B cell (primary cell): ENCODE measurements at regions of chr3 and their contacts with region 1.

Region 1: DNA sequence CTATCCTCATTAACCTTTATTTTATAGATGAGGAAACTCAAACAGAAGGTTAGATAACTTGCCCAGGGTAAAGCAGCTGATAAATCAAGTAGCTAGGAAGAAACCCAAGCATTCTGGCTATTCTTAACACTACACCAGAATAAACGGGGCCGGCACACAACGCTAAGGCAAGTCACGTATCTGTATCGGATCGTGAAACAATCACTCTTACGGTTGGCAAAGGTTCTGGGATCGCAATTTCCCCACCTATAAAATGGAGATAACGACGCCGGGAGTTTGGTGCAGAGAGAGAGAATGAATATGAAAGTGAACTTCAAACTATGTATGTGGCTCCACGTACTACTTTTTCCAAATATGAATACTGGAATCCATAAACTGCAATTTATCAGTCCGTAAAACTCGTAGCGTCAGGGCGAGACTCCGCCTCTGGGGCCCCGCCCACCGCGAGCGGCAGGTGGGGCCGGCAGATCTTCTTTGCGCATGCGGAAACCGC is 252 bp upstream of the ARMC8 start:
- DNase-seq: peak; percentile 94
- ATAC-seq: peak; percentile 94
- H3K4me3 ChIP-seq: peak overlapping the region; percentile 79 to 98 (median 94)
- H3K4me3 Mint-ChIP-seq: peak overlapping the region; percentile 97
- H3K27ac ChIP-seq: peak overlapping the region; percentile 85 to 89
- H3K27ac Mint-ChIP-seq: peak overlapping the region; percentile 97
- H3K4me1 ChIP-seq: peaks cover 8 to 17% of the 10 kb centered on the region in 2 donors
- H3K4me1 Mint-ChIP-seq: peaks cover 34% of the 10 kb centered on the region
- H3K27me3 ChIP-seq: peaks cover 0 to 19% (median 7%) of the 10 kb centered on the region in 4 experiments
- H3K27me3 Mint-ChIP-seq: peaks cover 15% of the 10 kb centered on the region
- CTCF ChIP-seq: no peak

Region 2: GRCh38 chr3:136196401-136197158 is 1990.3 kb before region 1 on chr3:
- CTCF ChIA-PET with region 1: no interaction called
- POLR2A ChIA-PET with region 1: interaction called, 3 read pairs
- intact Hi-C with region 1: loop called (anchors 10 kb)
- DNase-seq: peak; percentile 99
- ATAC-seq: peak; percentile 68
- H3K4me3 ChIP-seq: peak overlapping the region; percentile 65 to 95 (median 86)
- H3K4me3 Mint-ChIP-seq: peak overlapping the region; percentile 97
- H3K27ac ChIP-seq: peak overlapping the region; percentile 91 to 99
- H3K27ac Mint-ChIP-seq: peak overlapping the region; percentile 100
- H3K4me1 ChIP-seq: peaks cover 34 to 36% of the 10 kb centered on the region in 2 donors
- H3K4me1 Mint-ChIP-seq: peaks cover 36% of the 10 kb centered on the region
- H3K27me3 ChIP-seq: no peaks in the 10 kb centered on the region
- H3K27me3 Mint-ChIP-seq: no peaks in the 10 kb centered on the region
- CTCF ChIP-seq: no peak

Region 3: GRCh38 chr3:138174421-138175122 is 12.3 kb before region 1 on chr3 and contains the start of gene DBR1:
- CTCF ChIA-PET with region 1: interaction called, 4 read pairs
- POLR2A ChIA-PET with region 1: interaction called, 19 read pairs
- intact Hi-C with region 1: loop called (anchors 1 kb)
- DNase-seq: peak; percentile 88
- ATAC-seq: peak; percentile 93
- H3K4me3 ChIP-seq: peak within 1 kb of the TSS; percentile 75 to 95 (median 81)
- H3K4me3 Mint-ChIP-seq: peak within 1 kb of the TSS; percentile 100
- H3K27ac ChIP-seq: peak within 1 kb of the TSS; percentile 77
- H3K27ac Mint-ChIP-seq: peak within 1 kb of the TSS; percentile 99
- H3K4me1 ChIP-seq: peaks cover 14 to 16% of the 10 kb centered on the region in 2 donors
- H3K4me1 Mint-ChIP-seq: peaks cover 30% of the 10 kb centered on the region
- H3K27me3 ChIP-seq: no peaks in the 10 kb centered on the region
- H3K27me3 Mint-ChIP-seq: peaks cover 3% of the 10 kb centered on the region
- CTCF ChIP-seq: no peak
- total RNA-seq, gene DBR1: 22.6 and 27.6 TPM in 2 replicates

Region 4: DNA sequence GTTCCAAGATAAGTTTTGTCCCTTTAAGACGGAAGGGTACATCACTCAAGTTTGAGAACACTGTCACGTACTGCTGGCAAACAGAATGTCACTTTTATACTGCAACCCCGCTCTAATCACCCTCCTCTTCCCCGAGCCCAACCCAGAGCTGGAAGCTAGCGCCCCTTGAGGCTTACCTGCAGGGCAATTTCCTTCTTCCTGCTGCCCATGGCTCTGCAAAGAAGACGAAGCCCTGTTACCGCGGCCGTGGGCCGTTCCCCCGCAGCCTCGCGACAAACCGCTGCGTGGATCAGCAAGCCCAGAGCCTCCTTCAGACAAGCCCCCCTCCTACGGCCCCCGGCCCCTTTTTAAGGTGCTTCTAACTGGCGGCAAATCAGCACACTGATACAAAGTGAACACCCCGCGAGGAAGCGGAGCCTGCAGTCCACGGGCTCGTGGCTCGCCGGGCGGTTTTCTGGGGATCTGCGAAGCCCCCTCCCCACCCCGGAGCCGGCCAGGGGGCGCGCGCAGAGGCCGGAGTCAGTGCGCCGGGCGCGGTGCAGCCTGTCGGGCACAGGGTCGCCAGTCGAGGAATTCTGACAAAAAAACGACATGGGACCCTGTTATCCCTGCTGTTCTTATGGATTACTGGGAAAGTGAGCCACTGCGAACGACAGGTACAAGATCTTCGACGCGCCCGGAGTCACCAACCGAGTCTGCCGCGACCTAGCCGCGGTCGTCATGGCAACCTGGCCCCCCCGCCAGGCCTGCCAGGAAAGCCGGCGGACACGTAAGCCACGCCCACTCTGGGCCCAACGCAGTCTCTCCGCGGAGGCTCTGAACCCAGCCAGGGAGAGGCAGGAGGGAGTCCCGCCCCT is 142.5 kb after region 1 on chr3 and contains the start of gene NME9:
- CTCF ChIA-PET with region 1: no interaction called
- POLR2A ChIA-PET with region 1: no interaction called
- intact Hi-C with region 1: loop called (anchors 10 kb)
- DNase-seq: peak; percentile 84
- ATAC-seq: peak; percentile 92
- H3K4me3 ChIP-seq: peak within 1 kb of the TSS; percentile 22 to 73 (median 60)
- H3K4me3 Mint-ChIP-seq: peak within 1 kb of the TSS; percentile 93
- H3K27ac ChIP-seq: peak within 1 kb of the TSS in 1 of 2 donors; percentile 49
- H3K27ac Mint-ChIP-seq: peak within 1 kb of the TSS; percentile 62
- H3K4me1 ChIP-seq: peaks cover 7 to 18% of the 10 kb centered on the region in 2 donors
- H3K4me1 Mint-ChIP-seq: peaks cover 13% of the 10 kb centered on the region
- H3K27me3 ChIP-seq: peaks cover 0 to 15% (median 9%) of the 10 kb centered on the region in 4 experiments
- H3K27me3 Mint-ChIP-seq: peaks cover 40% of the 10 kb centered on the region
- CTCF ChIP-seq: peak; percentile 61
- total RNA-seq, gene NME9: not detected in 2 replicates

Region 5: DNA sequence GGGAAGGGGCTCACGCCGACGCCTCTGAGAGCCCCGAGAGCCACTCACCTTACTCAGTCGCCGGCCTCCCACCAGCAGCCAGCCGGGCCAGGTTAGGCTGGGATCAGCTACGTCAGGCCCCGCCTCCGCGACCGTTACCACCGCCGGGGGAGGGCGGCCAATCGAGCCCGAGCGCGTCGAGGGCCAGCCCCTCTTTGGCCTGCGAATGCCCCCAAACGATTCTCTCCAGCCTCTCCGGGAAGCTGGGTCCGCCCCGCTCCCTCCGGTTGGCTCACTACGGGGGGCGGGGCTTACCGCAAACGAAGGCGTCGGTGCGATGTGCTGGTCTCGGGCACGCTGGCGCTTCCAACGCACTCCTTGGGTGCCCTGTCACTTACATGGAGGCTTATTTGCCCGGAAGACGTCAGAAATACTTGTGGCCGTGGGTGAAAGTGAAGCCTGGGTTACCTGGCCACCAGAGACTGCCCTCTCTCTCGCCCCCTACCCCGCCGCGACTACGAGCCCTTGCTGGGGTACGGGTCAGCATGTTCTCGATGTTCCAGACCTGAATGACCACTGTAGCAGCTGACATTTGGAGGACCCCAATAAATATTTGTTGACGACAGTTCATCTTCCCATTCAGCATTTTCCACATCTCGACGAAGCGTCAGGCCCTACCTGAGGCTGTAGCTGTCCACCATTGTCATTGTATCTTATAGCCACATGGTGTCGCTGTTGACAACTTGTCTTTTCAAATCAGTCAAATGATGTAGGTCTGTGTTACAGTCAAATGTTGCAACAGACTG is 407.5 kb after region 1 on chr3 and contains the start of gene CEP70:
- CTCF ChIA-PET with region 1: no interaction called
- POLR2A ChIA-PET with region 1: no interaction called
- intact Hi-C with region 1: loop called (anchors 1 kb)
- DNase-seq: peak; percentile 93
- ATAC-seq: peak; percentile 92
- H3K4me3 ChIP-seq: peak within 1 kb of the TSS; percentile 69 to 93 (median 80)
- H3K4me3 Mint-ChIP-seq: peak within 1 kb of the TSS; percentile 91
- H3K27ac ChIP-seq: peak within 1 kb of the TSS; percentile 71 to 74
- H3K27ac Mint-ChIP-seq: peak within 1 kb of the TSS; percentile 85
- H3K4me1 ChIP-seq: peaks cover 5 to 10% of the 10 kb centered on the region in 2 donors
- H3K4me1 Mint-ChIP-seq: peaks cover 7% of the 10 kb centered on the region
- H3K27me3 ChIP-seq: peaks cover 0 to 3% (median 0%) of the 10 kb centered on the region in 4 experiments
- H3K27me3 Mint-ChIP-seq: no peaks in the 10 kb centered on the region
- CTCF ChIP-seq: peak; percentile 92
- total RNA-seq, gene CEP70: 9.6 and 11.6 TPM in 2 replicates

Region 6: DNA sequence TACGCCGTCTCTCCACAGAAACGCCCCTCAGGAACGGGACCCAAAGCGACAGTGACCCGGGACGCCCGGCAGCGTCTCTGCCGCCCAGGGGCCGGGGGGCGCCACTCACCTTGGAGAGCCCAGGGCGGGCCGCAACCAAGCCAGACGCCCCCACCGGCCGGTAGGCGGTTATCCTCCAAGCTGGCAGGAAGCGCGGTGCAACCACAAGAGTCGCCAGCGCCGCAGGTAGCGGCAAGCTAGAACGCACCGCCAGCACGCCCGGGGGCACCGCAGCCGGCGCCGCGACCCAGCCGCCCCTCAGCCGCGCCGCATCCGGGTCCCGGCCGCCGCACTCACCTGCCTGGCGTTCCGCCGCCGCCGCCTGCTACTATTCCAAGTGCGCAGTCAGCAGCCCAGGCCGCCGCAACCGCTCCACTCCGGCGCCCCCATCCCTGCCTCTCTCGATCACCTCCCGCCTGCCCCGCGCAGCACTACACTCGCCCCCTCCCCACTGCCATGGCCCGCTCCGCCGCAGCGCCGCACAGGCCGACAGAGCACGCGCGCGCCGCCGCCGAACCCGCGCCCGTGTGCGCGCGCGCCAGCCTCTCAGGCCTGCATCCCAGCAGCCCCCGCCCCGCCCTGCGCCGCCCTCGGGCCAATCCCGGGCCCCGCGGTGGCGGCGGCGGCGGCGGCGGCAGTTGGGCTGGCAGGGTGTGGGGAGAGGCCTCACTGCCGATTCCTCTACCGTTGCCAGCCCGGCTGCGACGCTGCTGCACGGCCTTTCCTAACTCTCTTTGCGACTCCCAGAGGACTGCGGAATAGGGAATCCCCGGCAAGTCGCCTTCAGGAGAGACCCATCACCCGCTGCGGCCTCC is 647.7 kb after region 1 on chr3 and contains the start of gene PIK3CB:
- CTCF ChIA-PET with region 1: no interaction called
- POLR2A ChIA-PET with region 1: no interaction called
- intact Hi-C with region 1: loop called (anchors 2 kb)
- DNase-seq: peak; percentile 89
- ATAC-seq: peak; percentile 95
- H3K4me3 ChIP-seq: peak within 1 kb of the TSS; percentile 67 to 88 (median 78)
- H3K4me3 Mint-ChIP-seq: peak within 1 kb of the TSS; percentile 92
- H3K27ac ChIP-seq: peak within 1 kb of the TSS; percentile 46 to 84
- H3K27ac Mint-ChIP-seq: peak within 1 kb of the TSS; percentile 95
- H3K4me1 ChIP-seq: peaks cover 14 to 18% of the 10 kb centered on the region in 2 donors
- H3K4me1 Mint-ChIP-seq: peaks cover 23% of the 10 kb centered on the region
- H3K27me3 ChIP-seq: no peaks in the 10 kb centered on the region
- H3K27me3 Mint-ChIP-seq: no peaks in the 10 kb centered on the region
- CTCF ChIP-seq: peak; percentile 31
- total RNA-seq, gene PIK3CB: 29.4 and 35.1 TPM in 2 replicates